ENCODE measurements at regions of chr1 and their contacts with region 1.

Region 1: DNA sequence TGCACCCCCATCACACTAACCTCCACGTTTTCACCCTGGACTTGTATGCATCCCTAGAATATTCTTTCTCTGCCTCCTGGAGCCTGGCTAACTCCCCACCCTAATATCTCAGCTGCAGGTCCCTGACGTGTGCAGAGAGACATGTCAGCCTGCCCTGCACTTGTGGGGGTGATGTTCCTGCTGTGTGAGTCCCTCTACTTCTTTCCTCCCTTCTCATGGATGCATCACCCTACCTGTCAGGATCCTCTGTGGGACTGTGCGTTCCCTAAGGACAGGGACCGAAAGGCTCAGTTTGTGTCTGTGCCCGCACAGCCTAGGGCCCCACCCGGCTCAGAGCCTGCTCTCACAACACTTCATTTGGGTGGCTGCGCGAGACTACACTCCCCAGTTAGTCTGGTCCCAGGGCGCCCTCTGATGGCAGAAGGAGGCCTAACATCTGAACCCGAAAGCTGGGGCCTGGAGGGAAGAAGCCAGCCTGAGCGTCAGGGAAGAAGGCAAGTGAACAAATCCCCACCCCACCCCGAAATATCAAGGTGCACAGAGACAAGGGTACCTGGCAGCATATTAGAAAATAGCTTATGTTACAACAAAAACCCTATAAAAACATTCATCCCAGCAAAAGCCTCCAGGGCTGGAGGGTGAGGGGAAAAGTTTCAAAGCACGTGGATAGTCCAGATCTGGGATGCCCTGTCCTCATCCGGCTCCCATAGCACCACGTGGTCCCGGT is 3.7 kb downstream of the CD52 start:
- DNase-seq: peak; percentile 93
- ATAC-seq: peak; percentile 66
- H3K4me3 ChIP-seq: peak overlapping the region in 4 of 5 experiments; percentile 90 to 95 (median 94)
- H3K4me3 Mint-ChIP-seq: peak overlapping the region; percentile 89
- H3K27ac ChIP-seq: peak overlapping the region in 1 of 2 donors; percentile 75
- H3K27ac Mint-ChIP-seq: peak overlapping the region; percentile 99
- H3K4me1 ChIP-seq: peaks cover 43% of the 10 kb centered on the region in 2 donors
- H3K4me1 Mint-ChIP-seq: peaks cover 57% of the 10 kb centered on the region
- H3K27me3 ChIP-seq: no peaks in the 10 kb centered on the region
- H3K27me3 Mint-ChIP-seq: no peaks in the 10 kb centered on the region
- CTCF ChIP-seq: peak; percentile 92

Region 2: DNA sequence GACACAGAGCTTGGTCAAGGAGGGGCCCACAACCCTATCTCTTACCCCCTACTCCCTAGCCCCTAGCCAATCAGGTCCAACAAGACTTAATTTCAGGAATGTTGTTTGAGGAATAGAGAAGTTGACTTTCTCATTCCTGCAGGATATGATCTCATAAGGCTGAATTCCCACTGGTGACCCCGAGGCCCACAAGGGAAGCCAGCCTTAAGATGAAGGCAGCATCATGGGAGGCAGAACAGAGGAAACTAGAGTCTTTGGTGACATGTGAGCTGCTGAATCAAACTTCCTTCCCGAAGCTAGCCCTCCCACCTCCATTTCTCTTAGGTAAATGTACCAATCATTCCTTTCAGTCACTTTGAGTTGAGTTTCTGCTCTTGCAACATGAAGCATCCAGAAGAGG is 219.0 kb before region 1 on chr1:
- CTCF ChIA-PET with region 1: interaction called, 4 read pairs
- POLR2A ChIA-PET with region 1: no interaction called
- intact Hi-C with region 1: loop called (anchors 1 kb)
- DNase-seq: no peak
- ATAC-seq: no peak
- H3K4me3 ChIP-seq: no peak overlapping the region
- H3K4me3 Mint-ChIP-seq: no peak overlapping the region
- H3K27ac ChIP-seq: no peak overlapping the region
- H3K27ac Mint-ChIP-seq: no peak overlapping the region
- H3K4me1 ChIP-seq: no peaks in the 10 kb centered on the region
- H3K4me1 Mint-ChIP-seq: peaks cover 4% of the 10 kb centered on the region
- H3K27me3 ChIP-seq: no peaks in the 10 kb centered on the region
- H3K27me3 Mint-ChIP-seq: peaks cover 17% of the 10 kb centered on the region
- CTCF ChIP-seq: no peak

Region 3: DNA sequence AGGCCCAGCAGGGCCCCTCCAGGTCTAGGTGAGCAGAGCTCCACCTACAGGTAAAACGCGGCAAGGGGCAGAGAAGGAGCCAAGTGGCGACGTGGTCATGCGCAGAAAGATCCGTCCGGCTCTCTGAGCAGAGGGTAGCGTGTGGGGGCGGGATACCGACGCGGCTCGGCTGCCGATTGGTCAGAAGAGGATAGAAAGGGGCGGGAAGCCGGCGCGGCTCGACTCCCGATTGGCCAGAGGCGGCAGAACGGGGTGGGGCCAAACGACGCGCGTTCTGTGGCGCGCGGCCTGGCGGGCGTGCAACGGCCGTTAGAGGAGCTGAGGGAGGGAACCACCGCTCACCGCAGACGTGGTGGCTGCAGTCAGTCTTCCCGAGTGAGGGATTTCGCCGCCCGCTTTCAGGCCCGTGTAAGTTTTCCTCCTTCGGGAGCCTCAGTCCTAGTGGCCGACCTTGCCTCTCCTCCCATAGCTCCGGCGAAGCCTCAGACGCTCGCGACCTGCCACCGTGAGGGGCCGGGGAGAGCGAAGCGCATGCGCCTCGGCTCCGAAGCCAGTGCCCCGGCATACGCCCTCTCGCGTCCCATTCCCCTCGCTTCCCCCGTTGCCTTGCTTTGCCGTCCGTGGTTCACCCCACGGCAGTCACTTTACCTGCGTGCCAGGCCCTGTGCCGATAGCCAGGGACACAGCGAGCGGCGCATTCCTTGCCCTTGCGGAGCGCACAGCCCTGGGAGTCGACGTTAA is 87.4 kb before region 1 on chr1 and contains the start of gene CEP85:
- CTCF ChIA-PET with region 1: interaction called, 43 read pairs
- POLR2A ChIA-PET with region 1: interaction called, 5 read pairs
- intact Hi-C with region 1: loop called (anchors 1 kb)
- DNase-seq: peak; percentile 100
- ATAC-seq: peak; percentile 87
- H3K4me3 ChIP-seq: peak within 1 kb of the TSS; percentile 62 to 93 (median 81)
- H3K4me3 Mint-ChIP-seq: peak within 1 kb of the TSS; percentile 97
- H3K27ac ChIP-seq: peak within 1 kb of the TSS; percentile 59 to 86
- H3K27ac Mint-ChIP-seq: peak within 1 kb of the TSS; percentile 95
- H3K4me1 ChIP-seq: peaks cover 11 to 16% of the 10 kb centered on the region in 2 donors
- H3K4me1 Mint-ChIP-seq: peaks cover 27% of the 10 kb centered on the region
- H3K27me3 ChIP-seq: no peaks in the 10 kb centered on the region
- H3K27me3 Mint-ChIP-seq: no peaks in the 10 kb centered on the region
- CTCF ChIP-seq: peak; percentile 90
- total RNA-seq, gene CEP85: 16.2 and 16.9 TPM in 2 replicates

Region 4: DNA sequence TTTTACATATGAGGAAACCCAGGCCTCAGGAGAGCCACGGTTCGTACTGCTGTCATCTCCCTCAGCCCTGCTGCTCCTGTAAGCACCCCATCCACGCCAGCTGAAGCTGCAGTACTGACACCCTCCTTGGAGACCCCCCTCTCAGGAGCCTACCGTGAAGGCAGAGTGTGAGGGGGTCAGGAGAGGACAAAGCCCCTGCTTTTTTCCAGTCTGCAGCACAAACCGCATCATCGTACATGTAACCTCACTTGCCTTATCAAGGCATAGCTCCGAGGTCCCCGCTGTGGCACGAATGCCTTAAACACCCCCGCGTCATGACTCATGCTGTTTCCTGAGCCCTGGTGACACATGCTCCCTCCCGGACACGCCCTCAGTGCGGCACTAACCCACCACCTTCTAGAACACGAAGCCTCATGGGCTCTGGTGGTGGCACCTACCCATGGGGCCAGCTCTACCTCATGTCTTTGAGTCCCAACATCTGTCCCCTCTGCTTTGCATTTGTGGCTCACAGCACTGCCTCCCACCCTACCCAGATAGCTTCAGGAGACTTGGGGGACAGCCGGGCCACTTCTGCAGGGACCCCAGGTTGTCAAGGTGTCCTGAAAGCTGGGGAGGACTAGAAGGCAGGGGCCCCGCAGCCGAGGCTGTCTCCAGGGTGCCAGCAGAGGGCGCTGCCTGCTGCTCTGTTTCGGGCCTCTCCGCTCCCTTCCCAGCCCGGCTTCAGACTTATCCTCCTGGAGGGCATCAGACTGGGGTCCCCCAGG is 36.7 kb before region 1 on chr1:
- CTCF ChIA-PET with region 1: interaction called, 1,400 read pairs
- POLR2A ChIA-PET with region 1: interaction called, 1,239 read pairs
- intact Hi-C with region 1: loop called (anchors 1 kb)
- DNase-seq: peak; percentile 87
- ATAC-seq: peak; percentile 47
- H3K4me3 ChIP-seq: peak overlapping the region in 2 of 5 experiments; percentile 5 to 19
- H3K4me3 Mint-ChIP-seq: peak overlapping the region; percentile 87
- H3K27ac ChIP-seq: peak overlapping the region; percentile 93 to 96
- H3K27ac Mint-ChIP-seq: peak overlapping the region; percentile 97
- H3K4me1 ChIP-seq: peaks cover 79 to 89% of the 10 kb centered on the region in 2 donors
- H3K4me1 Mint-ChIP-seq: peaks cover 88% of the 10 kb centered on the region
- H3K27me3 ChIP-seq: no peaks in the 10 kb centered on the region
- H3K27me3 Mint-ChIP-seq: no peaks in the 10 kb centered on the region
- CTCF ChIP-seq: peak; percentile 77

Region 5: GRCh38 chr1:26306290-26307229 is 14.9 kb before region 1 on chr1 and contains the start of gene UBXN11:
- CTCF ChIA-PET with region 1: interaction called, 8 read pairs
- POLR2A ChIA-PET with region 1: interaction called, 47 read pairs
- intact Hi-C with region 1: loop called (anchors 1 kb)
- DNase-seq: peak; percentile 94
- ATAC-seq: peak; percentile 100
- H3K4me3 ChIP-seq: peak within 1 kb of the TSS; percentile 60 to 99 (median 74)
- H3K4me3 Mint-ChIP-seq: peak within 1 kb of the TSS; percentile 95
- H3K27ac ChIP-seq: peak within 1 kb of the TSS; percentile 52 to 87
- H3K27ac Mint-ChIP-seq: peak within 1 kb of the TSS; percentile 93
- H3K4me1 ChIP-seq: peaks cover 17 to 29% of the 10 kb centered on the region in 2 donors
- H3K4me1 Mint-ChIP-seq: peaks cover 27% of the 10 kb centered on the region
- H3K27me3 ChIP-seq: no peaks in the 10 kb centered on the region
- H3K27me3 Mint-ChIP-seq: no peaks in the 10 kb centered on the region
- CTCF ChIP-seq: no peak
- total RNA-seq, gene UBXN11: 81.4 and 83.8 TPM in 2 replicates

Region 6: DNA sequence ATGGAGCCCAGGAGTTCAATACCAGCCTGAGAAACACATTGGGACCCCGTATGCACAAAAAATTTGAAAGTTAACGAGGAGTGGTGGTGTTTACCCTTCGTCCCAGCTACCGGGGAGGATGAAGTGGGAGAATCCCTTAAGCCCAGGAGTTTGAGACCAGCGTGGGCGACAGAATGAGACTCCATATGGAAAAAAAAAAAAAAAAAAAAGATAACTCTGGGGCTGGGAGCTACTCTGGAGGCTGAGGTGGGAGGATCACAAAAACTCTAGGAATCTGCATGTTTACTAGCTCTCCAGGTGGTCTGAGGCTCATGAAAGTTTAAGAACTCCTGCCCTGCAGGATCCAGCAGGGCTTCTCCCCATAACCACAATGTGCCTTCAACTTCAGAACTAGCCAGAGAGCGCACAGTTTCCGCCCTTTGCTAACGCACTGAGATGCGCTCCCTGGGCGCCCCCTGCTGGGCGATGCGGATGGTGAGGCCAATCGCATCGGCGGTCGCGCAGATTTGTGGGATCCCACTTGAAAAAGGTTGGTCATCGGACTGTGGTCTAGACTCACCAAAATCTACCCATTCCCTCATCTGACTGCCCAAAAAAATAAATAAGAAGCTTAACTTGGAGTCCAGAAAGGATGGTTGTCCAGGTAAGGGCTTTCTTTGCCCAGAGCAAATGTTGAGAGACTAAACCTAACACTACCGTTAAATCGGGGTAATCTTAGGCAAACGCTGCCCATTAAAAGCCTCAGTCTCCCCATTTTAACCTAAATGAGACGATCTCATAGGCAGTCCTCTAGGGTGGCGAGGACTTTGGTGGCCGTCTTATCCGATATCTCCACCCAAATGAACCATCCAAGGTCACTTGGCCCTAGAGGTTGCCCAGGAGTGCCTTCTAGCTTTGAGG is 42.3 kb after region 1 on chr1:
- CTCF ChIA-PET with region 1: interaction called, 28 read pairs
- POLR2A ChIA-PET with region 1: interaction called, 8 read pairs
- intact Hi-C with region 1: loop called (anchors 1 kb)
- DNase-seq: peak; percentile 87
- ATAC-seq: peak; percentile 82
- H3K4me3 ChIP-seq: no peak overlapping the region
- H3K4me3 Mint-ChIP-seq: no peak overlapping the region
- H3K27ac ChIP-seq: no peak overlapping the region
- H3K27ac Mint-ChIP-seq: no peak overlapping the region
- H3K4me1 ChIP-seq: peaks cover 22 to 28% of the 10 kb centered on the region in 2 donors
- H3K4me1 Mint-ChIP-seq: peaks cover 31% of the 10 kb centered on the region
- H3K27me3 ChIP-seq: peaks cover 0 to 36% (median 14%) of the 10 kb centered on the region in 4 experiments
- H3K27me3 Mint-ChIP-seq: peaks cover 28% of the 10 kb centered on the region
- CTCF ChIP-seq: peak; percentile 95

Region 7: DNA sequence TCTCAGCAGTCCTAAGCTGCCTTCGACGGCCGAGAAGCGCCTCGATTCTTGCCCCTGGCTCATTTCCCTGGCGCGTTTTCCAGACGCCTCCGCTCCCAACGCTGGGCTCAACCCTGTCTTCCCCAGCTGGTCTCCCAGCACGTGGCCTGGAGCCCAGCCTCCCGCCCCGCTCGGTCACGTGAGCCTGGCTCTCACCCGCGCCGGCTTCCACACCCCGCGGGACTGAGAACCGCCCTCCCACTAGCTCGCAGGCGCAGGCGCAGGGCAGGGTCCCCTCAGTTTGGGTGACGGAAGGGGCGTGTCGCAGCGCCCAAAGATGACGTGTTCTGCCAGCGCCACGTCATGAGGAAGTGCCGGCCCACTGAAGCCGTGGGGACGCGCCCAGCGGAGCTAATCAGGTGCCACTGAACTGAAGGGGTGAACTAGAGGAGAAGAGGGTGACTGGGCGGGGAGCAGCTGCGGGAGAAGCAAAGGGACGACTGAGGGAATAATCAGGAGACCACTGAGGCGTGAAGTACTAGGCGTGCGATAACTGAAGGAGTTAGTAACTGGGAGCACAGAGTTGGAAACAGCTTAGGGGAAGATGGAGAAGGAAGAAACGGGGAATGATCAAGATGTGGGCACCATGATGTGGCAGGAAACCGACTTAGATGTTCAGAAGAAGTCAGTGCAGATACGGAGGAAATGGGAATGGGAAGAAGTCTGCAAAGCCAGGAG is 110.7 kb after region 1 on chr1 and contains the start of gene DHDDS:
- CTCF ChIA-PET with region 1: interaction called, 5 read pairs
- POLR2A ChIA-PET with region 1: no interaction called
- intact Hi-C with region 1: loop called (anchors 10 kb)
- DNase-seq: peak; percentile 99
- ATAC-seq: peak; percentile 97
- H3K4me3 ChIP-seq: peak within 1 kb of the TSS; percentile 62 to 97 (median 77)
- H3K4me3 Mint-ChIP-seq: peak within 1 kb of the TSS; percentile 95
- H3K27ac ChIP-seq: peak within 1 kb of the TSS; percentile 61 to 86
- H3K27ac Mint-ChIP-seq: peak within 1 kb of the TSS; percentile 93
- H3K4me1 ChIP-seq: peaks cover 15 to 21% of the 10 kb centered on the region in 2 donors
- H3K4me1 Mint-ChIP-seq: peaks cover 20% of the 10 kb centered on the region
- H3K27me3 ChIP-seq: no peaks in the 10 kb centered on the region
- H3K27me3 Mint-ChIP-seq: no peaks in the 10 kb centered on the region
- CTCF ChIP-seq: no peak
- total RNA-seq, gene DHDDS: 54.2 and 61.7 TPM in 2 replicates